ENCODE measurements at regions of chr9 and their contacts with region 1.

Region 1: DNA sequence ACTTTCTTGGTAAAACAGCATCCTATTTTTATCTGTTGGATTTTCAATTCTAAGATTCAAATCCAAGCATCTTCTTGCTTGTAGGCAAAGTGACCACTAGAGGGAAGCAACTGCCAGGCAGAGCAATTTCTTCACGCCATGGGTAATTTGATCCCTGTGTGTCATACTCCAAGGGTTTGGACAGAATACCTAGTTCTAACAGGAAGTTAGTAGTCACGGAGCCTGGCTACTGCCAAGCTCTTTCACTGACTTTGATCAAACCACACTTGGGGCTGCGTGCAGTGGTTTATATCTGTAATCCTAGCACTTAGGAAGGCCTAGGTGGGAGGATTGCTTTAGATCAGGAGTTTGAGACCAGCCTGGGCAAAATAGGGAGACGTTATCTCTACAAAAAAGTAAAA is 473.6 kb upstream of the TNC start:
- DNase-seq: peak; percentile 56 to 68 (median 65)
- H3K4me3 ChIP-seq: no peak overlapping the region
- H3K27ac ChIP-seq: no peak overlapping the region
- H3K4me1 ChIP-seq: no peaks in the 10 kb centered on the region
- H3K27me3 ChIP-seq: peaks cover 2 to 25% (median 11%) of the 10 kb centered on the region in 5 experiments

Region 2: GRCh38 chr9:115604831-115605483 is 13.4 kb after region 1 on chr9:
- CTCF ChIA-PET with region 1: interaction called, 30 read pairs
- POLR2A ChIA-PET with region 1: no interaction called
- DNase-seq: no peak
- H3K4me3 ChIP-seq: no peak overlapping the region
- H3K27ac ChIP-seq: no peak overlapping the region
- H3K4me1 ChIP-seq: no peaks in the 10 kb centered on the region
- H3K27me3 ChIP-seq: peaks cover 0 to 5% (median 0%) of the 10 kb centered on the region in 5 experiments

Region 3: DNA sequence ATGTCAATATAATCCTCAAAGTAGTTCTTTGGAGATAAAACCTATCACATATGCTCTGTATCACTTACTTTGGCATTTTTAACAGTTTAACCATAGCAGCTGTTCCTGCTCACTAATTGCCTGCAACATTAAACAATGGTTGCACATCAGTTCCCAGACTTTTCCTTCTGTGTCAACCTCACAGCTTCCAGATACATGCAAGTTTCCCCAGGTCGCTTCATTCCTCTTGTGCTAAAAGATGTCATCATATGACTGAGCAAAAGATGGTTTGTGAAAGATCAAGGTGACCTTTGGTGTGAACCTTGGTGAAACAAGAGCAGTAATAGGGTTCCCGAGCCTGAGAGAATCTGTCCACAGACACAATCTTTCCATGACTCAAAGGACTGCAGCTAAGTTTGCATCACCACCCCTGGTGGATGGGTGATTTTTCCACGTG is 61.6 kb after region 1 on chr9:
- CTCF ChIA-PET with region 1: no interaction called
- POLR2A ChIA-PET with region 1: no interaction called
- DNase-seq: no peak
- H3K4me3 ChIP-seq: no peak overlapping the region
- H3K27ac ChIP-seq: no peak overlapping the region
- H3K4me1 ChIP-seq: no peaks in the 10 kb centered on the region
- H3K27me3 ChIP-seq: peaks cover 0 to 3% (median 0%) of the 10 kb centered on the region in 5 experiments

Region 4: DNA sequence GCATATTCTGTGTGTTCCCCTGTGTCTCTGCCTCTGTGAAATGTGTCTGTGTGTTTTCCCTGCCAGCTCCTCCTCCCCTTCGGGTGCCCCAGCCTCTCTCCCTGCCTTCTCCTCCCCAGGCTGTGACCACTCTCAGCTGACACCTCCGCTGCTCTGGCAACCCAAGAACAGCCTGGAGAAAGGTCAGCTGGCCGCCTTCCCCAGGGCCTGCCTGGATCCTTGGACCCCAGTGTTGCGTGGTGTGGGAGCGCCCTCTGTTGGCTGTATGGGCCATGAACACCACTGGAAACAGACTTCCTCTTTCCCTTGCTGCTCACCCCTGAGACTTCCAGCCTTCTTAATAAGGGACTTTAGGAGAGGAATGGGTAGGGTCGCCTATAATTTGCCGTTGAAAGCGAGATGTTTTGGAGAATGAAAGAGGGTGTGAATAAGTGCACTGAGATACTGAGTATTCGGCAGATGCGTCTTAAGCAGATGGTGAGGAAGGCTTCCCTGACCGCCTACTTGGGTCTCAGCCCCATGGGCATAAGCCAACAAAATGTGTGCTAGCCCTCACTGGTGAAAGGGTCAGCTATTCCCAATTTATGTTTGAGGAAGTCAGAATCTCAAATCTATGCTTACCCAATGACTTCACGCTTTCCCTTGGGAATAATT is 980.6 kb after region 1 on chr9:
- CTCF ChIA-PET with region 1: interaction called, 14 read pairs
- POLR2A ChIA-PET with region 1: no interaction called
- DNase-seq: peak; percentile 44 to 72 (median 70)
- H3K4me3 ChIP-seq: no peak overlapping the region
- H3K27ac ChIP-seq: no peak overlapping the region
- H3K4me1 ChIP-seq: no peaks in the 10 kb centered on the region
- H3K27me3 ChIP-seq: peaks cover 0 to 2% (median 0%) of the 10 kb centered on the region in 5 experiments

Region 5: DNA sequence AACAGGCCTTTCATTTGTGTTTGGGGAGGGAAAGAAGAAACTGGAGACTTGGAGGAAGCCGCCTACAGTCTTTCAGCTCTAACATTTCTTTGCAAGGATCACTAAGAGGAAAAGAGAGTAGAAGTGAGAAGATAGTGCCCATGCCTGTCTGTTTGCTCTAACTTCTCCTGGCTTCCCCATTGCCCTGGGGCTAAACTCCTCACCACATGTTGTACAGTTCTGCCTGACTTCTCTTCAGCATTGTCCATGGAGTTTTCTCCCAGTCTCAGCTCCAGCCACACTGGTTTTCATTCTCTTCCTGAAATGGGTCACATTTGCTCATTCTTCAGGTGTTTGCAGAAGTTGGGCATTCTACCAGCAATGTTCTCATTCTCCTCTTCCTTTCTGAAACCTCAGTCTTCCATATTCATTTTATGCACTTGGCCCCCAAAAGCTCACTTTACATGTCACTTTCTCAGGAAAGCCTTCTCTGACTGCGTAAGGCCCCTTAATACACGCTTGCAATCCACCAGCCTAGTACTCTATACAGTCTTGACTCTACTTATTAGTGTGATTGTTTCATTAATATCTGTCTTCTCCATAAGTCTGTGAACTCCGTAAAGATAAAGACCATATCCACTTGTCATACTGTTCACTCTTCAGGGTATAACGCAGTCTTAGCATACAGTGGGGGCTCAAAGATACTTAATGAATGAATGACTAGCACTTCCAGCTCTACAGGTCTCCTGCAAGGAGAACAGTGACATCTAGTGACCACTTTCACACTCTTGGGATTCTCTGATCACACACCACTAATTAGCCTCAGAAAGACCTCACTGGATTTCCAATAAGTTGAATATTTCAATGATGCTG is 1055.3 kb after region 1 on chr9:
- CTCF ChIA-PET with region 1: interaction called, 27 read pairs
- POLR2A ChIA-PET with region 1: no interaction called
- DNase-seq: peak; percentile 2 to 36 (median 19)
- H3K4me3 ChIP-seq: no peak overlapping the region
- H3K27ac ChIP-seq: no peak overlapping the region
- H3K4me1 ChIP-seq: no peaks in the 10 kb centered on the region
- H3K27me3 ChIP-seq: no peaks in the 10 kb centered on the region

Region 6: GRCh38 chr9:116661037-116661954 is 1069.7 kb after region 1 on chr9:
- CTCF ChIA-PET with region 1: interaction called, 20 read pairs
- POLR2A ChIA-PET with region 1: interaction called, 3 read pairs
- DNase-seq: peak; percentile 60 to 77 (median 70)
- H3K4me3 ChIP-seq: no peak overlapping the region
- H3K27ac ChIP-seq: no peak overlapping the region
- H3K4me1 ChIP-seq: no peaks in the 10 kb centered on the region
- H3K27me3 ChIP-seq: peaks cover 0 to 4% (median 0%) of the 10 kb centered on the region in 5 experiments

Measured in common myeloid progenitor, CD34-positive (primary cell).